ENCODE measurements at regions of chr11 and their contacts with region 1.

Region 1: DNA sequence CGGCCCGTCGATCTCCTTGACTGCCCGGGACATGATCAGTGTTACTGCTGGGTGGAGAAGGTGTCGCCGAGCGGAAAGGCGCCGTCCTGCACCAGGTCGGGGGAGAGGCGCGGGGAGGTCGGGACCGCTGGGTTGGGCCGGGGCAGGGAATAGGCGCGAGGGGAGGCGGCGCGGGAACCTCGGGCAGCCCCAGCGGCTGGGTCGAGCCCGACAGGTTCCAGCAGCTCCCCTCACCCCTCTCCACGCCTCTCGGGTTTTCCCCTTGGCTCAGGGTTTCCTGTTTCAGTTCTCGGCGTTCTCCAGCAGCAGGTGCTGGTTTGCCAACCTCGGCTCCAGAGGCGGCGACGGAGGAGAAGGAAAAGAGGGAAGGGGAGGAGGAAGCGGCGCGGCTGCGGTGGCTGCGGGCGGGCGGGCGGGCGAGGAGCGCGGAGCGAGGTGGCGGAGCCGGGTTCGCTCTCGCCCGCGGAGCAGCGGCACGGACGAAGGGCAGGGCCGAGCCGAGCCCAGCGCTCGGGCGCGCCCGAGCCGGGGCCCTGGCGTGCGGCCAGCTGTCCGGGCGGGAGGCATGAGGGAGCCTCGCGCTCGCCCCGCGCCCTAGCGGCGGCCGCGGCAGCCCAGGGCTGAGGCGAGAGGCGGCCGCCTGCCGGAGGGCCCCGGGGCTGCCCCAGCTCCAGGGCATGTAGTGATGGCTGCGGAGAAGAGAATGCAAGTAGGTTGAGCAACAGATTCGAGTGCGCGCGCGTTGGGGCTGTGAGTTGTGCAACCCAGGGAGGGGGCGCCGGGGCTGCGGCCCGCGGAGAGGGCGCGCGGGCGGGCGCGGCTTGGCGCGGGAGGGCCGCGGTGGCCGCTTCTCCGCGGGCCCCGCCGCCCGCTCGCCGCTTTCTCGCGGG is at the start of gene ZC3H12C:
- DNase-seq: peak; percentile 85 to 95 (median 94)
- H3K4me3 ChIP-seq: peak within 1 kb of the TSS; percentile 76 to 96 (median 86)
- H3K27ac ChIP-seq: peak within 1 kb of the TSS; percentile 81 to 94
- H3K4me1 ChIP-seq: peaks cover 20 to 58% (median 42%) of the 10 kb centered on the region in 4 experiments
- H3K27me3 ChIP-seq: no peaks in the 10 kb centered on the region

Region 2: GRCh38 chr11:109946322-109946846 is 146.4 kb before region 1 on chr11:
- CTCF ChIA-PET with region 1: interaction called, 22 read pairs
- POLR2A ChIA-PET with region 1: interaction called, 3 read pairs
- DNase-seq: peak; percentile 95 to 98 (median 98)
- H3K4me3 ChIP-seq: peak overlapping the region in 5 of 7 experiments; percentile 3 to 74 (median 42)
- H3K27ac ChIP-seq: peak overlapping the region; percentile 78 to 90
- H3K4me1 ChIP-seq: peaks cover 0 to 8% (median 4%) of the 10 kb centered on the region in 4 experiments
- H3K27me3 ChIP-seq: no peaks in the 10 kb centered on the region

Region 3: DNA sequence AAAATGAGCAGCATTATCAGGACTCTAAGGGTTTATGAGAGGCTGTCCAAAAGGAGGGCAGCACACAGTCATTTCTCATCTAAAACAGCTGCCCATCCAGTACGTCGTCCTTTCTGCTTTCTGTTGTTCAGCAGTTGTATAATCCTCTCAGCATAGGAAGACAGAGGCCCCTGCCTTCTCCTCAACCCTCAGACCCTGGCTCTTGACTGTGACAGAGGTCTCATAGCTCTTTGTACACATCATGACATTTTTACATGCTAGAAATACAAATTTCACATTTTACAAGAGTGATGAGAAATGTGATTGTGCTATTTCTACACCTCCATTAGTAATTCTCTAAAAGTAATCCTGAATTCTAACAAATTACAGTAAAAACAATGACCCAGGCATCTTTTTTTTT is 35.8 kb before region 1 on chr11:
- CTCF ChIA-PET with region 1: interaction called, 12 read pairs
- POLR2A ChIA-PET with region 1: interaction called, 11 read pairs
- DNase-seq: no peak
- H3K4me3 ChIP-seq: no peak overlapping the region
- H3K27ac ChIP-seq: no peak overlapping the region
- H3K4me1 ChIP-seq: no peaks in the 10 kb centered on the region
- H3K27me3 ChIP-seq: no peaks in the 10 kb centered on the region

Region 4: DNA sequence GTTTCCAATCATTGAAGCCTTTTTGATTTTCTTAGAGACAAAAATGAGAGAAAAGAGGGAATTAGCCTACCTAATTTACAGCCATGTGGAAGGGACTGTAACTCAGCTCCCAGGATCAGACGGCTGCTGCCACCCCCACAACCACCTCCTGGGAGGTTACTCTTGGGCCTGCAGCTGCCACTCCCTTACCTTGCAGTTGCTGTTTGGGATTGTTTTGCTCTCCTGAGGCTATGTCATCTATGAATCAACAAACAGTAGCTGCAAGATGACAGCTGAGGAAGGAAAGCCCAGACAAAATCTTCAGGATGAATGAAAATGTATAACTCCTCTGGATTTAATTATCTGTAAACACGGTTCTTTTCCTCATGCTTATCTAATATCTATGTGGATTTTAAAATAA is 27.6 kb before region 1 on chr11:
- CTCF ChIA-PET with region 1: interaction called, 12 read pairs
- POLR2A ChIA-PET with region 1: interaction called, 4 read pairs
- DNase-seq: no peak
- H3K4me3 ChIP-seq: no peak overlapping the region
- H3K27ac ChIP-seq: no peak overlapping the region
- H3K4me1 ChIP-seq: peaks cover 9 to 35% (median 20%) of the 10 kb centered on the region in 4 experiments
- H3K27me3 ChIP-seq: no peaks in the 10 kb centered on the region

Region 5: GRCh38 chr11:110130642-110131238 is 38.0 kb after region 1 on chr11:
- CTCF ChIA-PET with region 1: no interaction called
- POLR2A ChIA-PET with region 1: no interaction called
- DNase-seq: no peak
- H3K4me3 ChIP-seq: no peak overlapping the region
- H3K27ac ChIP-seq: no peak overlapping the region
- H3K4me1 ChIP-seq: peaks cover 0 to 12% (median 5%) of the 10 kb centered on the region in 4 experiments
- H3K27me3 ChIP-seq: no peaks in the 10 kb centered on the region

Measured in common myeloid progenitor, CD34-positive (primary cell).